ENCODE measurements at regions of chr10 and their contacts with region 1.

Region 1: DNA sequence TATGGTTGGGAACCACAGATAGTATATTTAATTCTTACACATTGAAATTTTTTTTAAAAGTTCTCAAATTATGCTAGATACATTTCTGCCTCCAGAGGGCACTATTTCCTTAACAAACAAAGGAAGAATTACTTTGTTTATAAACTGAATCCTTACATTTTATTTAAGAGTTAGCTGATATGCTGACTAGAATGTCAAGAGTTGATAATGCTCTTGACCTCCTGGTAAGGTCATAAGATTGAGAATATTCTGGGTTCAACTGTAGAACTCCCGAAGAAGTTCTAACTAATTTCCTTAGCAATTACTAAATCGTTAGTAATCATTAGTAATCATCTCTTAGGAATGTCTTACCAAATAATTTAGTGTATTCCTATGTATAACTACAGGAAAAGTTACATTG is 95.3 kb upstream of the CYP26C1 start:
- DNase-seq: no peak
- H3K4me3 ChIP-seq: no peak overlapping the region
- H3K27ac ChIP-seq: no peak overlapping the region
- H3K4me1 ChIP-seq: no peaks in the 10 kb centered on the region
- H3K27me3 ChIP-seq: no peaks in the 10 kb centered on the region
- CTCF ChIP-seq: peak; percentile 18 to 46 (median 31)
- EP300 ChIP-seq: no peak
- POLR2A ChIP-seq: no peak

Region 2: DNA sequence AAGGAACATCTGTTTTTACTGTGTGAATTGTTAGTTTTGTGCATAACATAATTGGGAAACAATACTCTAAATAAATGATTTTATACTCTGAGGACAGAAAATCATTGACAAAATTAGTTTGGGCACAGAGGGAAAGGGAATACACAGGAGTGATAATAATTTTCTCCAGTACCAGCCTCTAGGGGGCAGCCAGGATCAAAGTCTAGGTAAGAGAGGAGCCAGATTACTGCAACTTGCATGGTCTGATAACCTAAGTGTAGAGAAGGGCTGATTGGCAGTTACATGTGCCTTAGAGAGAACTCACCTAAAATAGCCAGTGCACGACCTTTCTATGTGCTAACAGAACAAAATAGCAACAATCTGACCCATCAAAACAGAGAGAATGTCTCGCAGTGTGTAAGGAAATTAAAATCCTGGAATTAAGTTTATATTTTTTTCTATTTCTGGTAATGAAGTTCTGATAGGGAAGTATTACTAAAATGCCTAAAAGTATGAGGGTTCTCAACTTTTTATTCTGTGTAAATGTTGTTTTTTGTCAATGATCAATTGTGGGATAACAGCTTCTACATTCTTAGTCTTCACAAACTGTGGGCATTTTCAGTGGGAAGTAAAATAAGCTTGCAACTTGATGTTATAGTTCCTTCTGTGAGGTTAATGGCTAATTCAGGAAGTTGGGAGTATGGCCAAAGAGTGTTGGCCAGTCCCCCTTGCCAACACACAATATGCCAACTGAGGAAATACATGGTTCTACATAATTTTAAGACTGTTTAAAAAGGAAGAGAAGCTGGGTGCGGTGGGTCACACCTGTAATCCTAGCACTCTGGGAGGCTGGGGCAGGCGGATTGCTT is 50.6 kb before region 1 on chr10:
- intact Hi-C with region 1: loop called in 1 of 4 experiments (anchors 10 kb)
- DNase-seq: peak in 2 of 5 donors; percentile 10 to 40
- H3K4me3 ChIP-seq: no peak overlapping the region
- H3K27ac ChIP-seq: no peak overlapping the region
- H3K4me1 ChIP-seq: no peaks in the 10 kb centered on the region
- H3K27me3 ChIP-seq: no peaks in the 10 kb centered on the region
- CTCF ChIP-seq: peak in 2 of 3 donors; percentile 25 to 36
- EP300 ChIP-seq: no peak
- POLR2A ChIP-seq: no peak

Region 3: DNA sequence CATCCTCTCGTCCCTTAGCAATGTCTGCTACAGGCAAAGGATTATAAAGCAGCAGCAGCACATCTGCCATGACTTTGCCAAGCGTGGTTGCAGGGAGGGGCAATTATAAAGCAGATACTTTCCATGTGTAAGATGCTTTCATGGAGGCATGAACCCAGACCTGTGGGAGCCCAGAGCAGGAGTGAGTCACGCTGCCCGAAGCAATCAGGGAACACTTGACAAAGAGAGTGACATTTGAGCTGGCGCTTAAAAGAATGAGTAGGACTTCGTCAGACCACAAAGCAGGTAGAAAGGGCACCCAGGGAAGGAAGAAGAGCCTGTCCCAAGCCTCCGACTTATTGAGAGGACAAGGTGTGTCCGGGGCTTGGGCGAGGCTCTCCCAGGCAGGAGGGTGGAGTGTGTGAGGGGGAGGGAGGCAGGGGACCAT is 369.6 kb after region 1 on chr10:
- intact Hi-C with region 1: no loop called
- DNase-seq: no peak
- H3K4me3 ChIP-seq: no peak overlapping the region
- H3K27ac ChIP-seq: no peak overlapping the region
- H3K4me1 ChIP-seq: no peaks in the 10 kb centered on the region
- H3K27me3 ChIP-seq: no peaks in the 10 kb centered on the region
- CTCF ChIP-seq: no peak
- EP300 ChIP-seq: no peak
- POLR2A ChIP-seq: no peak